ENCODE measurements at regions of chr2 and their contacts with region 1.

Region 1: DNA sequence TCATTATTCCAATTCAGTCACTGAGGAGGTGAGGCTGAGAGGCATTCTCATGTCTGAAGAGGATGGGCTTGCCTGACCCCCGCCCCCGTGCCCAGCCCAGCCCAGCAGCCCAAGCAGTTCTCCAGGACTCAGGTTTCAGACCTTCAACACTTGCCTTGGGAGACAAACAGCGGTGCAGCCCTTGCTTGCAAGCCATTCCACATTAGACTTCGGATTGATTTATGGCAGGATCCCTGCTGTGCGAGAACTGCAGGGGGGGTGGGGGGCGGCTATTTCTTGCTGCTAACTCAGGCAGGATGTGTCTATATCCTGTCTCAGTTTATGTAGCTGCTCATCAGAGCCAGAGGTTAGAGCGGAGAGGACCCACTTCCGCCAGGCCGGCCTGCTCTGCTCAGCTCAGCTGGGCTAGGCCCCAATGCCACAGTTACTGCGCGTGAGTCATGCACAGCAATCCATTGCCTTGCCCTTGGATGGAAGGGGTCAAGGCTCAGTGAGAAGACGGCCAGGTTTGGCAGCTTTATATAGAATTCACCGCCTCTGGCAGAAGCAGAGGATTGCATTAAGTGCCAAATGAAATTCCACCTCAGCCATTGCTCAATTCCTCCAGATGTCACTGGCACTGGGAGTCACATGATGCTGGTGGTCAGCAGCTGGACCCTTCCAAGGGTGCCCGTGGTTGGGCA is 1.8 kb downstream of the GYPC start:
- DNase-seq: peak; percentile 78
- ATAC-seq: peak; percentile 82
- H3K4me3 Mint-ChIP-seq: peak overlapping the region; percentile 97
- H3K27ac Mint-ChIP-seq: peak overlapping the region; percentile 97
- H3K4me1 Mint-ChIP-seq: peaks cover 55% of the 10 kb centered on the region
- H3K27me3 Mint-ChIP-seq: no peaks in the 10 kb centered on the region

Region 2: GRCh38 chr2:126575631-126576030 is 82.1 kb before region 1 on chr2:
- POLR2A ChIA-PET with region 1: no interaction called
- DNase-seq: no peak
- ATAC-seq: no peak
- H3K4me3 Mint-ChIP-seq: no peak overlapping the region
- H3K27ac Mint-ChIP-seq: no peak overlapping the region
- H3K4me1 Mint-ChIP-seq: peaks cover 2% of the 10 kb centered on the region
- H3K27me3 Mint-ChIP-seq: no peaks in the 10 kb centered on the region

Region 3: GRCh38 chr2:126672980-126673605 is 15.3 kb after region 1 on chr2:
- POLR2A ChIA-PET with region 1: no interaction called
- DNase-seq: no peak
- ATAC-seq: no peak
- H3K4me3 Mint-ChIP-seq: no peak overlapping the region
- H3K27ac Mint-ChIP-seq: no peak overlapping the region
- H3K4me1 Mint-ChIP-seq: peaks cover 18% of the 10 kb centered on the region
- H3K27me3 Mint-ChIP-seq: no peaks in the 10 kb centered on the region

Region 4: GRCh38 chr2:126761981-126762878 is 104.5 kb after region 1 on chr2:
- POLR2A ChIA-PET with region 1: interaction called, 21 read pairs
- DNase-seq: peak; percentile 74
- ATAC-seq: peak; percentile 95
- H3K4me3 Mint-ChIP-seq: peak overlapping the region; percentile 68
- H3K27ac Mint-ChIP-seq: peak overlapping the region; percentile 83
- H3K4me1 Mint-ChIP-seq: peaks cover 33% of the 10 kb centered on the region
- H3K27me3 Mint-ChIP-seq: peaks cover 13% of the 10 kb centered on the region

Measured in activated naive CD8-positive, alpha-beta T cell treated with anti-CD3 and anti-CD28 coated beads, Interleukin-2, amount 10 ng/mL, durations not matched to agents 7 days and 5 days (primary cell).